ENCODE measurements at regions of chr9 and their contacts with region 1.

Region 1: DNA sequence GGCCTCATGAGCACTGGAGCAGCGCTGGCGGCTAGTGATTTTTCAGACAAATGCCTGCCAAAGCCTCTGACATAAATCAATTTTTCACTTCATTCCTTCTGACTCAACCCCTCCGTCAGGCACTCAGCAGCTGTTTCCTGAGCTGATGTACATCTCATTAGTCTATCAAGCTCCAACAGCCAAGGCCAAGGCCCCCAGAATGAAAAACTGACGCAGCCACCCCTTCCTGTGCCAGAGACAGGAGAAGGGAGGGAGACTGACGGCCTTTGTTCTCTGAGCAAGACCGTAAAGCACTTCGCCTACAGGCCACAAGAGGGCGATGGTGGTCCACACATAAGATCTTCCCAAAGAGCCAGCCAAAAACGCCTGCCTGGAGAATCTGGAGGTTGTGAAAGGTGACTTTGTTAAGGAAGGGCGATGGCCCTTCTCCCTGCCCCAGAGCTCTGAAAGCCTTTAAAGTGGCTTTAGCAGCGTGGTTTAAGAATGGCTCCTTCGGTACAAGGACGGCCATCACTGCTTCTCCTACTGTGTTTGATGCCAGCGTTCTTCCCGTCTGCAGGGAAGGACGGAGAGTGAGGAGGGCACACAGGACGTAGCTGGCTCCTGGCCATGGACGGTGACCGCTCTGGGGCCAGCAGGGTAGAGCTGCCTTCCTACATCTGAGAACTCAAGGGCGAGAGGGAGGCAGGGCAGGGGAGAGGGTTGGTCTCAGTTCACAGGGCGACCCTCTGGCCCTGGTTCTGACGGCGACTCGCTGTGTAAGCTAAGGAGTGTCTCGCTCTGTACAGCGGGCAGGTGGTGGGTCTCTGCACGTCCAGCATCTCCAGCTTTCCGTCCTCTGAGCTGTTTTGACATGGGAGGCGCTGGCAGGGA is 37.0 kb downstream of the ALG2 start:
- DNase-seq: peak; percentile 96
- ATAC-seq: peak; percentile 91
- H3K4me3 Mint-ChIP-seq: peak overlapping the region; percentile 20
- H3K27ac Mint-ChIP-seq: peak overlapping the region; percentile 84
- H3K4me1 Mint-ChIP-seq: peaks cover 57% of the 10 kb centered on the region
- H3K27me3 Mint-ChIP-seq: peaks cover 4% of the 10 kb centered on the region
- CTCF ChIP-seq: peak; percentile 89

Region 2: GRCh38 chr9:99173570-99174504 is 10.9 kb before region 1 on chr9:
- CTCF ChIA-PET with region 1: interaction called, 40 read pairs
- POLR2A ChIA-PET with region 1: interaction called, 10 read pairs
- intact Hi-C with region 1: no loop called
- DNase-seq: peak; percentile 32
- ATAC-seq: peak; percentile 83
- H3K4me3 Mint-ChIP-seq: no peak overlapping the region
- H3K27ac Mint-ChIP-seq: peak overlapping the region; percentile 50
- H3K4me1 Mint-ChIP-seq: peaks cover 30% of the 10 kb centered on the region
- H3K27me3 Mint-ChIP-seq: no peaks in the 10 kb centered on the region
- CTCF ChIP-seq: no peak

Region 3: DNA sequence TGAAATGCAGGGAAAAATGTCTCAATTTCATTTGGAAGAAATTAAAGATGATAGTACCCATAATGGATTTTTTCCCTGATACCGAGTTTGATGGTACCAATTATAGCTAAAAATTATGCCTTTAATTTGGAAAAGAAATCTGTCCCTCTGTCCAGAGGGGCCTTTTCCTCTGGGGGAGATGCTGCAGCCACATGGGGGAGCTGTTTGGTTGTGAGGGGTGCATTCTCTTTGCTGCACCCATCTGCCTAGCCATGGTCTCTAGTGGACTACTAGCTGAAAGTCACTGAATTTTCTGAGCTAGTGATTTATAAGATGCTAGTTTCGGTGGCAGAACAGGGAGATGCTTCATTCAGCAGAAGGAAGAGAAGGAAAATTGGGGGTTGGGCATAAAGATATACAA is 47.0 kb after region 1 on chr9:
- CTCF ChIA-PET with region 1: interaction called, 32 read pairs
- POLR2A ChIA-PET with region 1: no interaction called
- intact Hi-C with region 1: no loop called
- DNase-seq: peak; percentile 71
- ATAC-seq: peak; percentile 67
- H3K4me3 Mint-ChIP-seq: no peak overlapping the region
- H3K27ac Mint-ChIP-seq: no peak overlapping the region
- H3K4me1 Mint-ChIP-seq: peaks cover 15% of the 10 kb centered on the region
- H3K27me3 Mint-ChIP-seq: no peaks in the 10 kb centered on the region
- CTCF ChIP-seq: peak; percentile 79

Region 4: DNA sequence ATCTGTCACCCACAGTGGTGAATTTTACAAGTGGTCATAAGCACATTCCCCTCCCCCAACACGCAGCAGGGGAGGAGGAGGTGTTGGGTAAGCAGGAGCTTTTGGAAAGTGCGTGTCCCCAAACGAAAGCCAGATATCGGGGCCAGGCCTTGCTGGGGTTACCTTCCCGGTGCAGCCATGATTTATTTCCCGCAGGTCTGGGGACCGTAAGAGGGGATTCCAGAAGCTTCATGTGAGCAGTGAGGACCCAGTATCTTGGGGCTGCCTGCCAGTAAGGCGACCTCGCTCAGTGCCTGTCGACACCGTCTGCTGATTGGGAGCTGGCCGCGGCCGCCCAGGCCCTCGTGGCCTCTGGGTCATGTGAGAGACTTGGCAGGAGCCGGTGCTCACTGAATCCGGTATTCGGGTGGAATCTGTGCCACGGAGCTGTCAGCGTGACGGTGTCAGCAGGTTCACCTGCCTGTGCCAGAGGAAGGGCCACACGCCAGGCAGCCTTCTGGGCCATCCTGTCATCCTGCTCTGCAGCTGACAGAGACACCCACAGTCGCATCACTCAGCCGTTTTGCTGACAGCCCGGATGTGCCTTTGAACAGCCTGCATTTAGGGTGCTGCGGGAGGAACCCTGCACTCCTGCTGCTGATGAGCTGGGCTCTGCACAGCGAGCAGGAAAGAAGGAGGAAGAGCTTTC is 74.7 kb after region 1 on chr9:
- CTCF ChIA-PET with region 1: interaction called, 20 read pairs
- POLR2A ChIA-PET with region 1: interaction called, 4 read pairs
- intact Hi-C with region 1: no loop called
- DNase-seq: peak; percentile 68
- ATAC-seq: peak; percentile 90
- H3K4me3 Mint-ChIP-seq: peak overlapping the region; percentile 45
- H3K27ac Mint-ChIP-seq: peak overlapping the region; percentile 79
- H3K4me1 Mint-ChIP-seq: peaks cover 29% of the 10 kb centered on the region
- H3K27me3 Mint-ChIP-seq: peaks cover 10% of the 10 kb centered on the region
- CTCF ChIP-seq: no peak

Region 5: GRCh38 chr9:99336005-99336404 is 151.3 kb after region 1 on chr9:
- CTCF ChIA-PET with region 1: no interaction called
- POLR2A ChIA-PET with region 1: no interaction called
- intact Hi-C with region 1: no loop called
- DNase-seq: no peak
- ATAC-seq: no peak
- H3K4me3 Mint-ChIP-seq: no peak overlapping the region
- H3K27ac Mint-ChIP-seq: no peak overlapping the region
- H3K4me1 Mint-ChIP-seq: peaks cover 3% of the 10 kb centered on the region
- H3K27me3 Mint-ChIP-seq: peaks cover 11% of the 10 kb centered on the region
- CTCF ChIP-seq: no peak

Region 6: GRCh38 chr9:99819856-99820684 is 635.4 kb after region 1 on chr9:
- CTCF ChIA-PET with region 1: interaction called, 3 read pairs
- POLR2A ChIA-PET with region 1: no interaction called
- intact Hi-C with region 1: loop called (anchors 5 kb)
- DNase-seq: peak; percentile 96
- ATAC-seq: peak; percentile 49
- H3K4me3 Mint-ChIP-seq: peak overlapping the region; percentile 100
- H3K27ac Mint-ChIP-seq: peak overlapping the region; percentile 98
- H3K4me1 Mint-ChIP-seq: peaks cover 38% of the 10 kb centered on the region
- H3K27me3 Mint-ChIP-seq: no peaks in the 10 kb centered on the region
- CTCF ChIP-seq: no peak